ENCODE measurements at regions of chr1 and their contacts with region 1.

Region 1: DNA sequence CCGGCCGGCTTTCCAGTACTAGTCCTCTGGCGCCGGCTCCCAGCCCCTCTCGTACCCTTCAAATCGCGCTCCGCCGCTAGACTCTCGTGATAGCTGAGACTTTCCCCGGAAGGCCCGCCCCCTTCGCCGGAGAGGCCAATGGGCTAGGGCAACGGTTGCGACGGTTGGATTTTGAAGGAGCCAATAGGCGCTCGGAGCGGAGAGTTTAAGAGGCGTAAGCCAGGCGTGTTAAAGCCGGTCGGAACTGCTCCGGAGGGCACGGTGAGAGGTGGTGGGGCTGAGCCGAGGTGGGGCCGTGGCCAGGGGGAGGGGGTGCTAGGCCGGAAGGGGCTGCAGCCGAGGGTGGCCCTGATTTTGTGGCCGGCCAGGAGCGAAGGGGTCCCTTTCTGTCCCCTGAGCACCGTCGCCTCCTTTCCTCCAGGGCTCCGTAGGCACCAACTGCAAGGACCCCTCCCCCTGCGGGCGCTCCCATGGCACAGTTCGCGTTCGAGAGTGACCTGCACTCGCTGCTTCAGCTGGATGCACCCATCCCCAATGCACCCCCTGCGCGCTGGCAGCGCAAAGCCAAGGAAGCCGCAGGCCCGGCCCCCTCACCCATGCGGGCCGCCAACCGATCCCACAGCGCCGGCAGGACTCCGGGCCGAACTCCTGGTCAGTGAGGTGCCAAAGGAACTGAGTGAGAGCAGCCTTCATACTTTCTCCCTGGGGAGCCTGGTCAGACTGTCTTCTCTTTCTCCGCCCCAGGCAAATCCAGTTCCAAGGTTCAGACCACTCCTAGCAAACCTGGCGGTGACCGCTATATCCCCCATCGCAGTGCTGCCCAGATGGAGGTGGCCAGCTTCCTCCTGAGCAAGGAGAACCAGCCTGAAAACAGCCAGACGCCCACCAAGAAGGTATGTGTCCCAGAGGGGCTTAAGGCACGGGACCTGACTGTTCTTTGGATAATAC is at the start of gene CDC20:
- DNase-seq: peak; percentile 96 to 100
- H3K4me3 ChIP-seq: peak within 1 kb of the TSS; percentile 63 to 67
- H3K27ac ChIP-seq: peak within 1 kb of the TSS; percentile 84 to 86
- H3K4me1 ChIP-seq: peaks cover 6 to 7% of the 10 kb centered on the region in 2 donors
- H3K27me3 ChIP-seq: no peaks in the 10 kb centered on the region
- CTCF ChIP-seq: no peak
- total RNA-seq, gene CDC20: not detected

Region 2: GRCh38 chr1:42931108-42931539 is 427.9 kb before region 1 on chr1:
- intact Hi-C with region 1: loop called (anchors 10 kb)
- DNase-seq: peak in 1 of 2 donors; percentile 65
- H3K4me3 ChIP-seq: no peak overlapping the region
- H3K27ac ChIP-seq: peak overlapping the region in 1 of 2 donors; percentile 48
- H3K4me1 ChIP-seq: peaks cover 6 to 16% of the 10 kb centered on the region in 2 donors
- H3K27me3 ChIP-seq: no peaks in the 10 kb centered on the region
- CTCF ChIP-seq: peak; percentile 39 to 58 (median 42)

Region 3: DNA sequence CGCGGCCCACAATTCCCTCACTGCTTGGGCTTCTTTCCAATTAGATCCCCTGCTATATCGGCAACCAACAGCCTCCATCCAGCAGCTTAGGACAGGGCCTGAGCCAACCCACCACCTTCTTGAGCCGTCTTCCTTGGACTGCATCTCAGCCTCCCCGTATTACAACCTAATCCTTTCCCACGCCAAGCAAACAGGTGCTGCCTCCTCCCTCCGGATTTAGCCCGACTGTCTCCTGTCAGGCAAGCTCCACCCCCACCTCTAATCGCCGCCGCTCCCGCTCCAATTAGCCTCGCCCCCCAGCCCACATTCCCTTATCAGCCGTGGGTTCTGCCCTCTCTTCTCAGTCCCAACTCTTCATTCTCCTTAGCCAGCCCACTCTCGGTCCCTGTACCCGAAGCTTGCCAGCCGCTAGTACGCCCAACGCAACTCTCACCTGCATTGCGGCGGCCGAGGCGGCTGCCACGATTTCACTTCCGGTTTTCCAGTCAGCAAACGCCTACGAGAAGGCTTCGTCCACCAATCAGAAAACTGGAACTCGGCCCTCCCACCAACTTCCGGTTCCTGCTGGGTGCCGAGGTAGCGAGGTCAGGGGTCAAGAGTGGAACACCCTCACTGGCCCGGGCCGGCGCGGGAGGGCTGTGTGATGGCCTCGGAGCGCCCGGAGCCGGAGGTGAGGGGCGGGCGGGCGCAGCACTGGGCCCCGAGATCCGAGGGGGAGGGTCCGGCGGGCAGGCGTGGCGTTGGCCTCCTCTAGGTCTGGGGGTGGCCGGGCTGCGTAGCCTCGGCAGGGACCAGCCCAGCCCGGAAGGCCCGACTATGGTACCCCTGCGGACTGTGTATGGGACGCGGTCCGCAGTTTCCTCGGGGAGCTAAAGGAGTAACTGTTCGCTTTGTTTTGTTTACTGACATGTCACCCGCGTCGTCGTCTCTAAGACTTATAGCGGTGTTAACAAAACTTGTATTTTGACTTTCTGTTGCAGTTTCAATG is 30.6 kb after region 1 on chr1 and contains the starts of genes MED8 and SZT2:
- intact Hi-C with region 1: loop called (anchors 1 kb)
- DNase-seq: peak; percentile 93 to 99
- H3K4me3 ChIP-seq: peak within 1 kb of the TSS; percentile 79 to 92
- H3K27ac ChIP-seq: peak within 1 kb of the TSS; percentile 86 to 90
- H3K4me1 ChIP-seq: peaks cover 18 to 25% of the 10 kb centered on the region in 2 donors
- H3K27me3 ChIP-seq: no peaks in the 10 kb centered on the region
- CTCF ChIP-seq: no peak
- total RNA-seq, gene MED8: 15.3 TPM
- total RNA-seq, gene SZT2: 35.9 TPM

Region 4: GRCh38 chr1:43423672-43424550 is 64.9 kb after region 1 on chr1:
- intact Hi-C with region 1: no loop called
- DNase-seq: no peak
- H3K4me3 ChIP-seq: no peak overlapping the region
- H3K27ac ChIP-seq: no peak overlapping the region
- H3K4me1 ChIP-seq: no peaks in the 10 kb centered on the region
- H3K27me3 ChIP-seq: no peaks in the 10 kb centered on the region
- CTCF ChIP-seq: no peak

Region 5: DNA sequence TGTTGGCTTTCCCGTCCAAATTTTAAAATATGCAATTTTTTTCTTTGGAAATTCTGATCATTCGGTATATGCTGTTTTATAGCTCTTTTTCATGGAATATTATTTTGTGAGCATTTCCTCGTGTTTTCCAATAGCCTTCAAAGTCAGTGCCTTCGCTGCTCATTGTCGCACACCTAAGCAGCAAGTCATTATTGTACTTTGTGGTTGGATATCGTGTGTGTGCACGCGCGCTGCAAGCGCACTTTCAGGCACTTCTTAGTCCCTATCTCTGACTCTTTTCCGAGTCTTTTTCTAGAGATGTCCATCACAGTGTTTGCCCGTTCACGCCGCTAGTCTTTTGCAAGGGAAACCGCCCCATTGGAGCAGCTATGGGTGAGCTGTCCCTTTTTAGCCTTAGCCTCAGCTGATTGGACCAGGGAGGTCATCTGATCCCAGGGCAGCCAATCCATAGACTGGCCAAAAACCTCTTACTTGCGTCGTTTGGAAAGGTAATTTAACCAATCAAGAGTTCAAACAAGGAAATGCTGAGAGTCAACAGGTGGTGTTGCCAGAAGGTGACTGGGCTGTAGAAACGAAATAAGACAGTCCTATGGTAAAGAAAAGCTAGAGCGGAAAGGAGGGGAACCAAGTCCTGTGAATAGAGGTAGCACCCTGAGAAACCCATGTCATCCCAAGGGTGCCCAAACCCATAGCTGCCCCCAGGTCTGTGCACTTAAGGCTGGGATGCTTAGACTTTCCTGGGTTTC is 95.4 kb after region 1 on chr1:
- intact Hi-C with region 1: loop called (anchors 5 kb)
- DNase-seq: peak in 1 of 2 donors; percentile 88
- H3K4me3 ChIP-seq: peak overlapping the region; percentile 66 to 77
- H3K27ac ChIP-seq: peak overlapping the region; percentile 88 to 94
- H3K4me1 ChIP-seq: peaks cover 0 to 5% of the 10 kb centered on the region in 2 donors
- H3K27me3 ChIP-seq: no peaks in the 10 kb centered on the region
- CTCF ChIP-seq: no peak

Measured in ascending aorta (tissue), 2 donors.